ENCODE measurements at regions of chr6 and their contacts with region 1.

Region 1: DNA sequence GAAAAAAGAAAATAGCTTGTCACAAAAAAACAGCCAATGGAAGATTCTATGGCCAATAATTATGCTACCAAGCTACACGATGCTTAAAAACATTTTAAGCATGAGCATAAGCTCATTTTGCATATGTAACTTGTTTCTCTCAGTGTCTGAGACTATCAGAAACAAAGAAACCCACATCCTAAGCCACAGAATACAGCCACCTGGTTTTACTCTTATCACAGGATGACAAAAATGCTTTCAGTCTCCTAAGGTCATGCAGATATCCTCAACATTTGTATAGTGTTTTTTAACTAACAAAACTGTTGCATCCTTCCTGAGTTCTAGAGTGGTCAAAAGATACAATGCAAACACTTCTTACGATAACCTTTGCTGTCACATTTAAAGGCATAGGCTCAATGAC is 172.1 kb upstream of the RUNX2 start:
- DNase-seq: peak; percentile 88
- H3K4me3 Mint-ChIP-seq: no peak overlapping the region
- H3K27ac Mint-ChIP-seq: peak overlapping the region; percentile 72
- H3K4me1 Mint-ChIP-seq: peaks cover 26% of the 10 kb centered on the region
- H3K27me3 Mint-ChIP-seq: no peaks in the 10 kb centered on the region

Region 2: GRCh38 chr6:45116714-45117410 is 39.2 kb before region 1 on chr6:
- intact Hi-C with region 1: loop called (anchors 2 kb)
- DNase-seq: no peak
- H3K4me3 Mint-ChIP-seq: peak overlapping the region; percentile 2
- H3K27ac Mint-ChIP-seq: peak overlapping the region; percentile 17
- H3K4me1 Mint-ChIP-seq: peaks cover 18% of the 10 kb centered on the region
- H3K27me3 Mint-ChIP-seq: no peaks in the 10 kb centered on the region

Region 3: GRCh38 chr6:45209762-45210161 is 53.7 kb after region 1 on chr6:
- intact Hi-C with region 1: loop called (anchors 2 kb)
- DNase-seq: no peak
- H3K4me3 Mint-ChIP-seq: no peak overlapping the region
- H3K27ac Mint-ChIP-seq: no peak overlapping the region
- H3K4me1 Mint-ChIP-seq: peaks cover 28% of the 10 kb centered on the region
- H3K27me3 Mint-ChIP-seq: no peaks in the 10 kb centered on the region